Mammary epithelial cell (primary cell): ENCODE measurements at regions of chr2 and their contacts with region 1.

Region 1: DNA sequence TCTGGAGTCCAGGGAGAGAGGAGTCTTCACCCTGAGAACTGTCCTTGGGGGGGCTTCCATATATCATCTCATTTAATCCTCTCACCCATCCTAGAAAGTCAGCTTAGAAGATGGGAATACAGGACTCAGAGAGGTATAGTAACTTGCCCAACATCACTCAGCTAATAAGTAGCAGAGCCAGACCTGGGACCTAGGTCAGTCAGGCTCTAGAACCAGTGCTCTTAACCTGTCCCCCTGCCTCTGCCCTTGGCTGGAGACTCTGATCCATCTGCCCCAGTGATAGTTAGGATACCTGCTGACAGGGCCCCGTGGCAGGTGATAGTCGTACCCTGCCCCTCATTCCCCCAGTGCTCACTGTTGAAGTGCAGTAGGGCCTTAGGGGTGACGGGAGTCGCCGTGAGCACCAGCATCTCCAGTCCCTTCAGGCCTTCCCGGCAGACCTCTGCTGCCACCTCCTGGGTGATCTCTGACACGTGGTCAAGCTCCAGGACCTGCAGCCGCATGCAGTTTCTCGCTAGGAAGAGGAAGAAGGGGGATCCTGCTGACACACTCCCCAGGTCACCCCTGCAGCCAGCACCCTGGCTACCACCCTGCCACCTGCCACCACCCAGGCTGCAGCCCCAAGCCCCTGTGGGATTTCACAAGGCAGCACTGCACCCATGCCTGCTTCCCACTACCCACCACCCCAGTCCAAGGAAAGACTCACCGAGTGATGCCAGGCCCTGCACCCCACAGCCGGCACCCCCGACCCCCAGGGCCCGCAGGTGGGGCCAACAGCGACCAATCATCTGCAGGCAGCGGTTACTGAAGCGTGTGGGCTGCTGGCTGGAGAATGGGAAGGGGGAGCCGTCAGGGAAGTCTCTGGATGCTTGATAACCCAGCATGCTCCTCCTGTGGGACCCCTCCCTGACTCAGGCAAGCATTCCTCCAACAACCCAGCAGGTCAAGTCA is 24.0 kb downstream of the FBXO41 start:
- DNase-seq: peak; percentile 39
- H3K4me3 ChIP-seq: no peak overlapping the region
- H3K27ac ChIP-seq: no peak overlapping the region
- H3K4me1 ChIP-seq: peaks cover 7% of the 10 kb centered on the region
- H3K27me3 ChIP-seq: no peaks in the 10 kb centered on the region
- CTCF ChIP-seq: peak; percentile 45 to 70

Region 2: DNA sequence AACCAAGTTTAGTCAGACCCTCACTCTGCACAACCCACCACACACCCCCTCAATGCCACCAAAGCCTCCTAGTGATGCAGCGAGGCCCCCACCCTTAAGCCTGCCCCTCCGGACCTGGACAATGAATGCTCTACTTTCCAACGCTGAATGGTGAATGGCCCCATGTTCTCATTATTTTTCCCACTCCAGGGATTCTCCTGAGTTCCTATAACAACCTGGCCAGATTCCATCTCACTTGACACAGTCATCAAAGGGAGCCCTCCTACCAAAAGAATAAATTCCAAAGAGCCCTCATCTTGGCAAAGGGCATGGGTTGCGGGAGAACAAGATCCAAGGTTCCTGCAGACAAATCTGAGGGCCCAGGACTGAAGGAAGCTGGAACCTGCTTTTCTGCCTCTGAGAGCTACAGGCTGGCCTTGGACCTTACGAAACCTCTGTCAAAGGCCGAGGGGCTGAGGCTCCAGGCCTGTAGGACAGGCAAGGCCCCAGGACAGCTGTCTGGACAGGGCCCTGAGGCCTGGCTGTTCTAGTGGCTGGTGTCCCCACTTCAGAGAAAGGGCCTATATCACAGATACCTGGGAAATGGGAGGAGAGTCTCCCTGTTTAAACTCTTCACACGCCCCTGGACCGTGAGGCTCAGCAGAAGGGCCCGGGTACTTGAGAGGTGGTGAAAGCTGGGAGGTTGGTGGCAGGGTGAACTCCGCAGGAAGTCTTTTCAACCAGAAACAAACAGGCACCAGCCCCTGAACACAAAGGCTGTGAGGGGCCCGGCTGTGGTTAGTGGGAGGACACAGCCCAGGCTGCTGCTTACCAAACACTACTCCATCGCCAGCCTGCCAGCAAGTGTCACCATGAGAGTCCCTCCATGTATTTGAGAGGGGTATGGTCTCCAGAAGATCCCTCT is 216.1 kb before region 1 on chr2:
- CTCF ChIA-PET with region 1: no interaction called
- dilution Hi-C with region 1: no loop called
- in situ Hi-C with region 1: no loop called
- intact Hi-C with region 1: no loop called
- DNase-seq: no peak
- H3K4me3 ChIP-seq: no peak overlapping the region
- H3K27ac ChIP-seq: no peak overlapping the region
- H3K4me1 ChIP-seq: no peaks in the 10 kb centered on the region
- H3K27me3 ChIP-seq: no peaks in the 10 kb centered on the region
- CTCF ChIP-seq: no peak

Region 3: GRCh38 chr2:73071360-73072133 is 188.8 kb before region 1 on chr2 and contains the start of gene SFXN5:
- CTCF ChIA-PET with region 1: interaction called, 18 read pairs
- dilution Hi-C with region 1: no loop called
- in situ Hi-C with region 1: no loop called
- intact Hi-C with region 1: no loop called
- DNase-seq: peak; percentile 93
- H3K4me3 ChIP-seq: peak within 1 kb of the TSS; percentile 59 to 91 (median 86)
- H3K27ac ChIP-seq: peak within 1 kb of the TSS; percentile 72
- H3K4me1 ChIP-seq: peaks cover 35% of the 10 kb centered on the region
- H3K27me3 ChIP-seq: no peaks in the 10 kb centered on the region
- CTCF ChIP-seq: peak in 1 of 2 donors; percentile 31
- total RNA-seq, gene SFXN5: 12.0 to 16.8 TPM

Region 4: GRCh38 chr2:73176881-73177644 is 83.2 kb before region 1 on chr2:
- CTCF ChIA-PET with region 1: no interaction called
- dilution Hi-C with region 1: no loop called
- in situ Hi-C with region 1: no loop called
- intact Hi-C with region 1: loop called (anchors 5 kb)
- DNase-seq: peak; percentile 64
- H3K4me3 ChIP-seq: peak overlapping the region; percentile 55 to 59 (median 55)
- H3K27ac ChIP-seq: no peak overlapping the region
- H3K4me1 ChIP-seq: peaks cover 27% of the 10 kb centered on the region
- H3K27me3 ChIP-seq: peaks cover 13% of the 10 kb centered on the region
- CTCF ChIP-seq: peak; percentile 64 to 93

Region 5: DNA sequence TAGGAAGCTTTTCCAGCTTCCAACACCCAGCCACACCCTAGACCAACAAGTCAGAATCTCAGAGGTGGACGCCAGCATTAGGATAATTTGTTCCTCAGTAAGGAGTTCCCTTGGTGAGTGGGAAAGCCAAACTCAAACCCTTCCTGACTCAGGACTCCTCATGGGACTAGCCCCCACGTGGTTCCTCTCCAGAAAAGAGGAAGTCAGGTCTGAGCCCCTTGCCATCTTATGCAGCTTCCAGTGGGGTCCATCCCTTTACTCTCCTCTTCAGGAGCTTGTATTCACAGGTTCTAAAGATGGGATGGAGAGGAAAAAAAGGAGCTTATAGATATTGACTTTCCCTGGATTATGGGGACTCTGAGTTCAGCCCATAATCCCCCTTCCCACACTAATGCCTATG is 72.8 kb before region 1 on chr2:
- CTCF ChIA-PET with region 1: no interaction called
- dilution Hi-C with region 1: no loop called
- in situ Hi-C with region 1: no loop called
- intact Hi-C with region 1: no loop called
- DNase-seq: no peak
- H3K4me3 ChIP-seq: no peak overlapping the region
- H3K27ac ChIP-seq: no peak overlapping the region
- H3K4me1 ChIP-seq: no peaks in the 10 kb centered on the region
- H3K27me3 ChIP-seq: no peaks in the 10 kb centered on the region
- CTCF ChIP-seq: no peak